ENCODE measurements at regions of chr1 and their contacts with region 1.

Region 1: GRCh38 chr1:36099681-36100341 is 11.1 kb downstream of the ADPRS start:
- DNase-seq: peak; percentile 70
- H3K4me3 ChIP-seq: no peak overlapping the region
- H3K27ac ChIP-seq: no peak overlapping the region
- H3K4me1 ChIP-seq: no peaks in the 10 kb centered on the region
- H3K27me3 ChIP-seq: no peaks in the 10 kb centered on the region
- CTCF ChIP-seq: peak; percentile 81 to 93 (median 84)
- POLR2A ChIP-seq: no peak

Region 2: DNA sequence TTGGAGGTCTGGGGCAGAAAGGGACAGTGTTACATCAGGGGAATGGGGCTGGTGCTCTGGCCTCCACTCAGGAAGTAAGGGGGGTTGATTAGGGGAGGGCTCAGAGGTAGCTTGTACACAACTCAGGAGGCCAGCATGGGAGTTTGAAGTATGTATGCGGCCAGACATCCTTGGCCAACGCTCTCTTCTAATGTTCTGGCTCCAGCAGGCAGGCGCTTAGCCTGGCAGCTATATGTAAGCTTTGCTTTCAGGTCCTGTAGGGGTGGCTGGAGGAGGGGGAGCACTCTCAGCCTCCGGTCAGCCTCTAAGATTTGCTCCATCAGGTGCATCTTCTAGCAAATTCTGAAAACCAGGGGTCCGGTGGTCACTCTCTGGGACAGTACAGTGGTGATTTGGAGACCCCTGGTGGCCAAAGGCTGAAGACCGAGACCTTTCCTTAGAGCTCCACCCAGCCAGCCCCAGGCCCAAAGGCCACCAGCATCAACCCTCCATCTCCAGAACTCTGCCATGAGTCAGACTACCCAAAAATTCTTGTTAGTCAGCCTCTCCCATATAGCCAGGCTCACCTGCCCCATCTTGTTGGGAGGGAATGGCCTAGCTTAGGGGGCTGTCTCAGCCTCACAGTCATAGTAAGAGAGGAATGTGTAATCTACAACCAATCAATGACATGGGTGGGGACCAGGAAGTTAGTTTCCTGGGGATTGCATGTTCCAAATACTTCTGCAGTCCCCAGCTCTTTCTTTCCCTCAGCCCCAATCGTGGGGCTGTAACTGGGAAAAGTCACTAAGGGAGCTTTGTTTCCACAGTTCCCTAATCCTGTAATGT is 34.9 kb after region 1 on chr1:
- intact Hi-C with region 1: loop called (anchors 1 kb)
- DNase-seq: no peak
- H3K4me3 ChIP-seq: no peak overlapping the region
- H3K27ac ChIP-seq: peak overlapping the region; percentile 10 to 55
- H3K4me1 ChIP-seq: no peaks in the 10 kb centered on the region
- H3K27me3 ChIP-seq: no peaks in the 10 kb centered on the region
- CTCF ChIP-seq: peak in 3 of 4 experiments; percentile 64 to 77 (median 65)
- POLR2A ChIP-seq: no peak

Region 3: GRCh38 chr1:36187800-36188593 is 88.2 kb after region 1 on chr1:
- intact Hi-C with region 1: loop called (anchors 5 kb)
- DNase-seq: peak; percentile 89
- H3K4me3 ChIP-seq: no peak overlapping the region
- H3K27ac ChIP-seq: peak overlapping the region; percentile 81 to 90
- H3K4me1 ChIP-seq: peaks cover 11% of the 10 kb centered on the region
- H3K27me3 ChIP-seq: no peaks in the 10 kb centered on the region
- CTCF ChIP-seq: peak; percentile 51 to 97 (median 95)
- POLR2A ChIP-seq: no peak

Measured in prostate gland (tissue), 2 donors.